Activated CD4-positive, alpha-beta memory T cell treated with anti-CD3 and anti-CD28 coated beads for 36 hours (primary cell): ENCODE measurements at regions of chr2 and their contacts with region 1.

Region 1: DNA sequence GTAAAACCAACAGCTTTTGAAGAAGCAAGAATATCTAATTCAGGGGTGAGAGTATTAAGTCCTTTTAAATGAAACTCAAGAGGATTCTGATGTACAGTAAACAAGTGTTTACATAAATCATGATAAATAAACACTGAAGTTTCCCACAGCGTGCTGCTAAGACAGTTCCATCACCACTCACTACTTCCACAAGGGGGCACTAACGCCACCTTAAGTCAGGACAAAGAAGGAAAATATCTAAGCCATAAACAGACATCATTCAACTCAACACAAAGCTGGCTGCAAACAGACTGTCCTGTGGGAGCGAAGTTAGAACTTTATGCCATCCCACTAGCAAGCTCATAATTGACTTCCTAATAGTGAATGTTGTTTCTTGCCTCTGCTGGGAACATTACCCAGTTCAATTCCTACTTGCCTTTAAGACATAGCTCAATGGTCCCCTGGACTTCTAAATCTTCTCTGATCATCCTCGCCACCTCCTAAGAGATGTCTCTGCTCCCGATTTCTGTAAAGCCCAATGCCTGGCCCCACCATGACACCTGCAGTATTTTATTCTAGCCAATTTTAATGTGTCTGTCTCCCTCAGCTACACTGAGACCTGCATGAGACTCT is 36.5 kb downstream of the MRPL44 start:
- DNase-seq: peak; percentile 66
- H3K4me3 Mint-ChIP-seq: no peak overlapping the region
- H3K27ac Mint-ChIP-seq: no peak overlapping the region
- H3K4me1 Mint-ChIP-seq: peaks cover 16% of the 10 kb centered on the region
- H3K27me3 Mint-ChIP-seq: no peaks in the 10 kb centered on the region

Region 2: GRCh38 chr2:223970343-223971128 is 23.2 kb before region 1 on chr2:
- CTCF ChIA-PET with region 1: interaction called, 76 read pairs
- POLR2A ChIA-PET with region 1: no interaction called
- intact Hi-C with region 1: loop called (anchors 1 kb)
- DNase-seq: peak; percentile 42
- H3K4me3 Mint-ChIP-seq: no peak overlapping the region
- H3K27ac Mint-ChIP-seq: no peak overlapping the region
- H3K4me1 Mint-ChIP-seq: peaks cover 12% of the 10 kb centered on the region
- H3K27me3 Mint-ChIP-seq: no peaks in the 10 kb centered on the region

Region 3: DNA sequence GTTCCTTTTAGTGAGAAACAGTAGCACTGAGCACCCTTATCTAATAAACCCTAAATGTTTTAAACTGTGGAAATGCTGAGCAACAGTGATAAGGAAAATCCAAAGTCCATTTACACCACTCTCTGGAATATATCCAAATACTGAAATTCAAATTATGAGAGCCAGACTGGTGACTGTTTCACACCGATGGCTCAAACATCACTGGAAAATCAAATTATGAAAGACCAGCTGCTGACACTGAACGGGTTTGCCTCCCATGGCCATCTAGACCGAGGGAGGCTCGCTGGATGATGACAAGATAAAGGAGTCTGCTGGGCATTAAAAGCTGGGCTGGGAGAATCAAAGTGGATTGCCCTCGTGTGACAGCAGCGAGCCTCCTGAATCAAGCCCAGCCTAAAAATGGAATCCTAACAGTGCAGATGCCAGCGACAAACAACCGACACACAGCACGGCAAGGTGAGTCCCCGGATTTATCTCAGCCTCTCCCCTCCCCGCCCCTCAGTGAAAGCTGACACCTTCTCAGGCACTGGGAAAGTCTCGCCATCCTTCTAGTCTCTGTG is 15.1 kb after region 1 on chr2:
- CTCF ChIA-PET with region 1: interaction called, 20 read pairs
- POLR2A ChIA-PET with region 1: no interaction called
- intact Hi-C with region 1: no loop called
- DNase-seq: no peak
- H3K4me3 Mint-ChIP-seq: no peak overlapping the region
- H3K27ac Mint-ChIP-seq: no peak overlapping the region
- H3K4me1 Mint-ChIP-seq: no peaks in the 10 kb centered on the region
- H3K27me3 Mint-ChIP-seq: peaks cover 2% of the 10 kb centered on the region

Region 4: GRCh38 chr2:224039124-224039940 is 45.6 kb after region 1 on chr2 and contains the start of gene SERPINE2:
- CTCF ChIA-PET with region 1: interaction called, 8 read pairs
- POLR2A ChIA-PET with region 1: no interaction called
- intact Hi-C with region 1: loop called (anchors 1 kb)
- DNase-seq: peak; percentile 65
- H3K4me3 Mint-ChIP-seq: peak within 1 kb of the TSS; percentile 83
- H3K27ac Mint-ChIP-seq: no peak within 1 kb of the TSS
- H3K4me1 Mint-ChIP-seq: peaks cover 12% of the 10 kb centered on the region
- H3K27me3 Mint-ChIP-seq: peaks cover 51% of the 10 kb centered on the region
- total RNA-seq, gene SERPINE2: 16.4 to 16.5 TPM

Region 5: GRCh38 chr2:224145751-224146355 is 152.1 kb after region 1 on chr2:
- CTCF ChIA-PET with region 1: no interaction called
- POLR2A ChIA-PET with region 1: no interaction called
- intact Hi-C with region 1: loop called (anchors 10 kb)
- DNase-seq: no peak
- H3K4me3 Mint-ChIP-seq: no peak overlapping the region
- H3K27ac Mint-ChIP-seq: no peak overlapping the region
- H3K4me1 Mint-ChIP-seq: no peaks in the 10 kb centered on the region
- H3K27me3 Mint-ChIP-seq: peaks cover 18% of the 10 kb centered on the region

Region 6: GRCh38 chr2:224284134-224284946 is 290.6 kb after region 1 on chr2:
- CTCF ChIA-PET with region 1: interaction called, 263 read pairs
- POLR2A ChIA-PET with region 1: interaction called, 3 read pairs
- intact Hi-C with region 1: loop called (anchors 1 kb)
- DNase-seq: no peak
- H3K4me3 Mint-ChIP-seq: no peak overlapping the region
- H3K27ac Mint-ChIP-seq: no peak overlapping the region
- H3K4me1 Mint-ChIP-seq: no peaks in the 10 kb centered on the region
- H3K27me3 Mint-ChIP-seq: peaks cover 21% of the 10 kb centered on the region

Region 7: GRCh38 chr2:224369028-224369632 is 375.4 kb after region 1 on chr2:
- CTCF ChIA-PET with region 1: interaction called, 13 read pairs
- POLR2A ChIA-PET with region 1: no interaction called
- intact Hi-C with region 1: no loop called
- DNase-seq: no peak
- H3K4me3 Mint-ChIP-seq: no peak overlapping the region
- H3K27ac Mint-ChIP-seq: no peak overlapping the region
- H3K4me1 Mint-ChIP-seq: no peaks in the 10 kb centered on the region
- H3K27me3 Mint-ChIP-seq: no peaks in the 10 kb centered on the region

Region 8: GRCh38 chr2:225889446-225889850 is 1895.7 kb after region 1 on chr2:
- CTCF ChIA-PET with region 1: no interaction called
- POLR2A ChIA-PET with region 1: no interaction called
- intact Hi-C with region 1: no loop called
- DNase-seq: no peak
- H3K4me3 Mint-ChIP-seq: no peak overlapping the region
- H3K27ac Mint-ChIP-seq: no peak overlapping the region
- H3K4me1 Mint-ChIP-seq: no peaks in the 10 kb centered on the region
- H3K27me3 Mint-ChIP-seq: peaks cover 4% of the 10 kb centered on the region